ENCODE measurements at regions of chr12 and their contacts with region 1.

Region 1: DNA sequence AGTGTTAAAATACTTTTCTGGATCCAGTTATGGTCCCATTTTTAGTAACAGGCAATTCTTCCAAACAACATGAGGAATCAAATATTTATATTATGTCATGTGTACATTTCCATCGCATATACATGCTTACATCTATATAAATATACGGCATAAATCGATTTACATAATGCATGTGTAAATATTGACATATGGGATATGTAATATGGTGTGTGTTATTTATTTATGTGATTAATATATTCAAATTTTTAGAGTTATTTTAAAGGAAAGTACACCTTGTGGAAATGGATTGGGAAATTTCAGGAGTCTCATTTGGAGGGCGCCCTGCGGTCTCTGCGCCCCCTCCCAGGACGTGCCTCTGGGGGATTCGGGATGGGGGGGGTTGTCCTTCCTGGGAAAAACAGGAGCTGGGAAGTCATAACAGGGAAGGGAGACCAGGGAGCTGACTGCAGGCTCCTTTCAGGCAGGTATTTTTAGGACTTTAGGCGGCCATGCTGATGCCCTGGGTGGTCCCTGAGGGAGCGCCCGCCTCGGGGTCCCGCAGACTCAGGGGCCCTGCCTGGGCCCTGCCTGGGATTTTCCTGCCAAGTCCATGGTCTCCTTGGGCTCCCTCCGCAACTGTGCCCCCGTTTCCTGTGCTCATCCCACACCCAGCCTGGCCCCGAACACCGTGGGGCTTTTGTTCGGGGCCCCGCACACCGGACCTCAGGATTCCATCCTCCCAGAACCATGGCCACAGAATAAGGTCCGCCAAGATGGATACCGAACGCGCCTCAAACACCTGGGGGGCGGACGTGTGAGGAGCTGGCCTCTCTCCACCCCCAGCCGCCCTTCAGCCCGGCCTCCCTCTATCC is 82.6 kb upstream of the SFSWAP start:
- DNase-seq: no peak
- ATAC-seq: no peak
- H3K4me3 ChIP-seq: no peak overlapping the region
- H3K27ac ChIP-seq: no peak overlapping the region
- H3K4me1 ChIP-seq: no peaks in the 10 kb centered on the region
- H3K27me3 ChIP-seq: no peaks in the 10 kb centered on the region
- CTCF ChIP-seq: no peak
- EP300 ChIP-seq: no peak
- POLR2A ChIP-seq: no peak
- RAD21 ChIP-seq: no peak

Region 2: GRCh38 chr12:131333621-131334367 is 294.5 kb before region 1 on chr12:
- CTCF ChIA-PET with region 1: no interaction called
- POLR2A ChIA-PET with region 1: no interaction called
- RAD21 ChIA-PET with region 1: no interaction called
- SMC1A ChIA-PET with region 1: no interaction called
- in situ Hi-C with region 1: loop called (anchors 5 kb)
- intact Hi-C with region 1: no loop called
- DNase-seq: no peak
- ATAC-seq: no peak
- H3K4me3 ChIP-seq: no peak overlapping the region
- H3K27ac ChIP-seq: no peak overlapping the region
- H3K4me1 ChIP-seq: no peaks in the 10 kb centered on the region
- H3K27me3 ChIP-seq: no peaks in the 10 kb centered on the region
- CTCF ChIP-seq: no peak
- EP300 ChIP-seq: no peak
- POLR2A ChIP-seq: no peak
- RAD21 ChIP-seq: no peak